Common myeloid progenitor, CD34-positive (primary cell): ENCODE measurements at regions of chr6 and their contacts with region 1.

Region 1: DNA sequence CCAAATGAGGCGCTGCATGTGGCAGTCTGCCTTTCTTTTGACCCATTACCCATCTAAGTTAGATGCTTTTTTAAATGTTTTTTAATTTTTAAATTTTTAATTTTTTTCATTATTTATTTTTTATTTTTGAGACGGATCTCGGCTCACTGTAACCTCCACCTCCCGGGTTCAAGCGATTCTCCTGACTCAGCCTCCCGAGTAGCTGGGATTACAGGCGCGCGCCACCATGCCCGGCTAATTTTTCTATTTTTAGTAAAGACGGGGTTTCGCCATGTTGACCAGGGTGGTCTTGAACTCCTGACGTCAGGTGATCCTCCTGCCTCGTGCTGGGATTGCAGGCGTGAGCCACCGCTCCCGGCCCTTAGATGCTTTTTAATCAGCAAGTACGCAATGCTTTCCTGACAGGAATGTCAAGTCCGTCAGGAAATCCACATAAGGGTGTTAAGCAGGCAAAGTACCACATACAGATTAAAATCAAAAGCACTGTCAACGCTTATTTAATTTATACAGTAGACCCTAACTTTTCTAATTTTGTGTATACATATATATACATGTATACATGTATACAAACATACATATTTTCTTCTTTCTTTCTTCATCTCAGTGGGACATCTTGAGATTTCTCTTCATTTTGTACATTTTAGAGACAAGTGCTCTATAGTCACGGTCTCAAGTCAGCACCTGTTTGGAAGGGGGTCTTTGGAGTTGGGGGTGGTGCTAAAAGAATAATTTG is 995 bp upstream of the GSTA4 start:
- DNase-seq: peak; percentile 72 to 83 (median 76)
- H3K4me3 ChIP-seq: peak overlapping the region in 6 of 7 experiments; percentile 38 to 94 (median 56)
- H3K27ac ChIP-seq: no peak overlapping the region
- H3K4me1 ChIP-seq: peaks cover 3 to 20% (median 13%) of the 10 kb centered on the region in 4 experiments
- H3K27me3 ChIP-seq: peaks cover 0 to 2% (median 0%) of the 10 kb centered on the region in 5 experiments

Region 2: GRCh38 chr6:52984247-52984646 is 11.8 kb before region 1 on chr6:
- CTCF ChIA-PET with region 1: interaction called, 41 read pairs
- POLR2A ChIA-PET with region 1: no interaction called
- DNase-seq: peak; percentile 67 to 95 (median 93)
- H3K4me3 ChIP-seq: peak overlapping the region in 3 of 7 experiments; percentile 9 to 50 (median 39)
- H3K27ac ChIP-seq: no peak overlapping the region
- H3K4me1 ChIP-seq: peaks cover 15 to 31% (median 29%) of the 10 kb centered on the region in 4 experiments
- H3K27me3 ChIP-seq: peaks cover 0 to 3% (median 0%) of the 10 kb centered on the region in 5 experiments

Region 3: DNA sequence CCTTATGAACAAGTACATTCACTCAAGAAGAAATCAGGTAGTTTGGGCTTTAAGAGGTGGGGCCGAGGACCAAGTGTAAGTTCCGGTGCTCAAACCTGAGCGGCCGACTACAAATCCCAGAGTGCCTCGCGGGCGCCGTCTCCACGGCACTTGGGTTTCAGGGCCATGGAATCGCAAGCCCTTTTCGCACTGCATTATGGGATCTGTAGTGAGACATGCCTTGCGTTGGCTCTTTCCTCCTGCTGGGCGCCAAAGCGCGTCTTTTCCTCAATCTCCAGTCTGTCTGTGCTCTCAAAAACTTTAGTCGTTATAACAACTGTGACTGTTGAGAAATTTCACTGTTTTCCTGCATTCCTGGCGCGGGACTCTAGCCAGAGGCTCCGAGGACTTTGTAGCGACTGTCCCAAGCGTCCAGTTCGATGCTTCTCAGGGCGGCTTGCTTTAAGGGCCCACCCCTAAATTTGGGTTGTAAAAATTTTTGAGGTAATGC is 68.7 kb after region 1 on chr6:
- CTCF ChIA-PET with region 1: interaction called, 16 read pairs
- POLR2A ChIA-PET with region 1: no interaction called
- DNase-seq: peak; percentile 97 to 98 (median 98)
- H3K4me3 ChIP-seq: peak overlapping the region; percentile 85 to 100 (median 96)
- H3K27ac ChIP-seq: peak overlapping the region; percentile 40 to 83
- H3K4me1 ChIP-seq: peaks cover 23 to 33% (median 29%) of the 10 kb centered on the region in 4 experiments
- H3K27me3 ChIP-seq: peaks cover 0 to 2% (median 0%) of the 10 kb centered on the region in 5 experiments